Activated CD4-positive, alpha-beta T cell treated with anti-CD3 and anti-CD28 coated beads, Interleukin-2, amount 10 ng/mL, durations not matched to agents 24 days and 14 days (primary cell): ENCODE measurements at regions of chr18 and their contacts with region 1.

Region 1: DNA sequence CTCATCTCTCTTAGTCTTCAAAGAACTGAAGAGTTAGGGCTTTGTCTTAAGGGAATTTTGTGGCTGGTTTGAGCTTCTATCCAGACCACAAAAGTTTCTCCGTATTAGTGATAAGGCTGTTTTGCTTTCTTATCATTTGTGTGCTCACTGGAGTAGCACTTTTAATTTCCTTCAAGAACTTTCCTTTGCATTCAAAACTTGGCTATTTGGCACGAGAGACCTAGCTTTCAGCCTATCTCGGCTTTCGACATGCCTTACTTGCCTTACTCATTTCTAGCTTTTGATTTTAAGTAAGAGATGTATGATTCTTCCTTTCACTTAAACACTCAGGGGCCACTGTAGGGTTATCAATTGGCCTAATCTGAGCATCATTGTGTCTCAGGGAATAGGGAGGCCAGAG is 29.9 kb downstream of the HDHD2 start:
- DNase-seq: no peak
- H3K4me3 Mint-ChIP-seq: no peak overlapping the region
- H3K27ac Mint-ChIP-seq: peak overlapping the region; percentile 30
- H3K4me1 Mint-ChIP-seq: peaks cover 20% of the 10 kb centered on the region
- H3K27me3 Mint-ChIP-seq: no peaks in the 10 kb centered on the region

Region 2: GRCh38 chr18:47100214-47100831 is 20.1 kb before region 1 on chr18:
- intact Hi-C with region 1: no loop called
- DNase-seq: peak; percentile 89
- H3K4me3 Mint-ChIP-seq: no peak overlapping the region
- H3K27ac Mint-ChIP-seq: no peak overlapping the region
- H3K4me1 Mint-ChIP-seq: no peaks in the 10 kb centered on the region
- H3K27me3 Mint-ChIP-seq: no peaks in the 10 kb centered on the region

Region 3: DNA sequence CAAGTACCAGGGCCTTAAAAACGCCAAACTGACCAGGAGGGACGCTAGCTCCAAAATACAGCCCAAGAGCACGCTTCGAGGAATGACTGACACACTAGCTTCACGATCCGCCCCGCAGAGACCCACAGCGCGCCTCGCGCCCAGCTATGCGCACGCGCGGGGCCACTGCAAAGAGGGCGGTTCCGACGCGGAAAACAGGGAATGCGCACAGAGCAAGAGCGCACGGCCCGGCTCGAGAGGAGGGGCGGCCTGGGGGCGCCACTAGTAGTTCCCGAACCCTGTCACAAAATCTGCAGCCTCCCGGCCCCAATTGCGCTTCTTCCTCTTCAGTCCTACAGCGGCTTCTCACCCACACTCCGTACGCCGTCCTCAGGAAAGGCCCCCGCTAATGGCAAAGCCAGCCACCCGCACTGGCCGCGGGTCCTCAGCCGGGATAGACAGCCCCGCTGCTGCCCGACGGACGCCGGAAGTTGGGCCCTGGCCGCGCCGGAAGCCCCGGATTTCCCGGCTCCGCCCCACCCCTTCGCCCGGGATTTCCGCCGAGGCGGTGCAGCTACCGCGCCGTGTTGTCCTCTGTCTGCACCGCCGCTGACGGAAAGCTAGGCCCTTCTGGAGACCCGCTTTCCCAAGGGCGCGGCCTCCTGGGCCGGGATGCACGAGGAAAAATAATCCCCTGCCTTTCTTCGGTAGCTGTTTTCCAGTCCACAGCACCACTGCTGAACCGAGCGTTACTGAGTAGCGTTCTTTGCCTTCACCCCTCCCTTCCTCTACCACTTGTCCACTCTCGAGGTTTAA is 29.8 kb after region 1 on chr18 and contains the start of gene HDHD2:
- intact Hi-C with region 1: loop called (anchors 1 kb)
- DNase-seq: peak; percentile 95
- H3K4me3 Mint-ChIP-seq: peak within 1 kb of the TSS; percentile 96
- H3K27ac Mint-ChIP-seq: peak within 1 kb of the TSS; percentile 95
- H3K4me1 Mint-ChIP-seq: peaks cover 27% of the 10 kb centered on the region
- H3K27me3 Mint-ChIP-seq: no peaks in the 10 kb centered on the region
- total RNA-seq, gene HDHD2: 37.7 and 40.6 TPM in 2 replicates

Region 4: GRCh38 chr18:47163241-47163640 is 42.8 kb after region 1 on chr18:
- intact Hi-C with region 1: loop called (anchors 1 kb)
- DNase-seq: no peak
- H3K4me3 Mint-ChIP-seq: no peak overlapping the region
- H3K27ac Mint-ChIP-seq: no peak overlapping the region
- H3K4me1 Mint-ChIP-seq: peaks cover 20% of the 10 kb centered on the region
- H3K27me3 Mint-ChIP-seq: no peaks in the 10 kb centered on the region